GM18951 (cell line): ENCODE measurements at regions of chr7 and their contacts with region 1.

Region 1: GRCh38 chr7:13279854-13280435 is 592.5 kb downstream of the ARL4A start:
- POLR2A ChIP-seq: no peak

Region 2: DNA sequence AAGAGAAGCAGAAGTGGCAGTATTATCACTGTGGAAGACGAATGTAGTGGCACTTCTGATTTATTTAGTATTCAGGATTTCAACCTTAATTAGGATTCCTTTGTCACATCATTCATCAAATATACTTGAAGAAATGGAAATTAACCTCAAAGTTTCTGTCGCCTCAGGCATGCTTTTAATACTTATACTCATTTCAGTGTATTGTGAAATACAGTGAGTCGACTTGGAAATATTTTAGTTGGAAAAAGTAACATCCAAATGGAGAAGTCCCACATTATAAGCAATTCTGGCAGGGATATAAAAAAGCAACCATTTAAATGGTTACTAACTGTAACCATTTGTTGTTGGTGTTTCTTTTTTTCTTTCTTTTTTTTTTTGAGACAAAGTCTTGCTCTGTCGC is 56.3 kb after region 1 on chr7:
- in situ Hi-C with region 1: no loop called
- POLR2A ChIP-seq: no peak

Region 3: DNA sequence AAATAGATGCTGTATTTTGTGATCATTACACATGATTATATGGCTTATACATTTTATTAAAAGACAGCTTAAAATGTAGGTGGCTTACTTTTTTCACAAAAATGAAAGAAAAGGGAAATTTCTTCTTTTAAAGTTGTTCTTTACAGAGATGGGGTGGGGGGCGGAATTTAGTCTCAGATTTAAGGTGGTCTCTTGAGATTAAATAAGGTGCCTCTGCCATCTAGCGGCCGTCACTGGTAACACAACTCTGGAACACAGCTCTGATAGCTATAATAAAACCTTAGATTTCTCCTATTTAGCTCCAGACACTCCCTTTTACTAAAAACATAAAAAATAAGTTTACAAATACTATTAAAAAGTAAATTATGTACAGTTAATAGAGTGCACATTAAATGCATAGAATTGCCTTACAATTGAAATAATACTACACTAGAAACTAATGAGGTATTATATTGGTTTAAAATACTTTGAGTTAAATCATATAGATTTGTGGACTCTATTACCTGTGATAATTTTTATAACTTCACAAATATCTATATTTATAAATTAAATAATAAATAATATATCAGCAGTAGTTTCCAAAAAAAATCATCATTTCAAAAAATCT is 1411.8 kb after region 1 on chr7:
- in situ Hi-C with region 1: loop called (anchors 25 kb)
- POLR2A ChIP-seq: no peak